Heart left ventricle (tissue), 16 donors: ENCODE measurements at regions of chr5 and their contacts with region 1.

Region 1: DNA sequence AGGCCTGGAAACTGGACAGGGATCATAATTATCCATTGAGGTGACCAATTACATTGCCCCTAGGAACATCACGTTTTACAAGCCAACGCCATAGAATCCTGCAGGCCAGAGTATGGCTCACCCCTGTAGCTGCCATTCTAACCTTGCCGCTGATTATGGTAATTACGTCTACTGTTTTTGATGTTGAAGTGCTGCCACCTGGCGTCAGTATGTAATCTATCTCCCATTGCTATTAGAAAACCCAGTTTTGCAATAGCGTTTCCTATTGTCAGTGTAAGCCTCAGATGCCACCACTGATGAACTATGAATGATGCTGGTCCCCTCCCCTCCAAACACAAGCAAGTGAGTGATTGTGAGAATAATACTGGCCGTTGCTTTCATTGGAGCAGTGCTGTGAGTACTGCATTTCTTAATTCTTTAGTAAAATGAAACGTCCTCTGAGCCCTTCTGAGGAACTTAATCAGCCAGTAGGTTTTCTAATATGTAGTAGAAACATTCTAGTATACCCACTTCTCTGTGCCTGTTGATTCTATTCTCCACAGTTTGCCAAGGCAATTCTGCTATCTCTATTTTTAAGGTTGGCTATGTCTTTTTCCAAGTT is 100.5 kb upstream of the NMUR2 start:
- DNase-seq: peak in 4 of 5 donors; percentile 32 to 50 (median 43)
- ATAC-seq: peak; percentile 42 to 89 (median 78)
- H3K4me3 ChIP-seq: no peak overlapping the region
- H3K27ac ChIP-seq: no peak overlapping the region
- H3K4me1 ChIP-seq: no peaks in the 10 kb centered on the region
- H3K27me3 ChIP-seq: peaks cover 0 to 6% (median 0%) of the 10 kb centered on the region in 9 donors
- CTCF ChIP-seq: peak; percentile 49 to 72 (median 56)
- POLR2A ChIP-seq: no peak

Region 2: GRCh38 chr5:151659001-151659754 is 846.4 kb before region 1 on chr5:
- intact Hi-C with region 1: loop called in 2 of 10 experiments (anchors 5 to 10 kb)
- DNase-seq: peak; percentile 84 to 92 (median 87)
- ATAC-seq: peak; percentile 75 to 87 (median 86)
- H3K4me3 ChIP-seq: no peak overlapping the region
- H3K27ac ChIP-seq: peak overlapping the region in 9 of 12 donors; percentile 4 to 52 (median 28)
- H3K4me1 ChIP-seq: peaks cover 3 to 39% (median 23%) of the 10 kb centered on the region in 12 donors
- H3K27me3 ChIP-seq: no peaks in the 10 kb centered on the region
- CTCF ChIP-seq: peak; percentile 80 to 98 (median 92)
- POLR2A ChIP-seq: no peak

Region 3: DNA sequence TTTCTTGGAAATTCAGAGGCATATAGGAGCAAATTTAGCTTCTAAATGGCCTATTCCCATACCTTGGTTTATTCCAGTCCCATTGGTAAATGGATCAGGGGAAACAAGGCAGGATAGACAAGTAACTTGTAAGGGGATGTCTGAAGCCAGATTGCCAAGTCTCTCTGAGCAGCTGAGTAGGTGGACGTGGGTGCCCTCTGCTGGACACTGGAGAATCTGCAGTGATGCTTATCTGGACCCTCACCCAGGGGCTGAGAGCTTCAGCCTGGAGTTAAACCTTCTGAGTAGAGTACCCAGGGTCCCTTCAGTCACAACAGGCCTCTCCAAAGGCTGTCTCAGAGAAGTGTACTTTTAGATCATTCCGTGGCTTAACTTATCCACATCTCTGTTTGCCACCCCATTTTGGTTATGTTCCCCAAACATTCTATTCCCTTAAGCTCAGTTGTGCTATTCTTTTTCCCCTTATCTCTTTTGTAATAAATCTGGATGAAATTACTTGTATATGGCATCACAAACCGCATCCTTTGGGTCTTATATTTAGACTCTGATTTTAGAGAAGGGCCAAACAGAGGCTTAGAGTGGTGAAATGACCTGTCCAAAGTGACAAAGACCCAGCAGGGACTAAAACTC is 362.6 kb before region 1 on chr5:
- intact Hi-C with region 1: loop called in 4 of 10 experiments (anchors 5 to 10 kb)
- DNase-seq: peak in 4 of 5 donors; percentile 25 to 48 (median 39)
- ATAC-seq: peak in 3 of 4 donors; percentile 68 to 78 (median 73)
- H3K4me3 ChIP-seq: no peak overlapping the region
- H3K27ac ChIP-seq: no peak overlapping the region
- H3K4me1 ChIP-seq: peaks cover 0 to 3% (median 0%) of the 10 kb centered on the region in 12 donors
- H3K27me3 ChIP-seq: no peaks in the 10 kb centered on the region
- CTCF ChIP-seq: peak; percentile 72 to 93 (median 84)
- POLR2A ChIP-seq: no peak

Region 4: DNA sequence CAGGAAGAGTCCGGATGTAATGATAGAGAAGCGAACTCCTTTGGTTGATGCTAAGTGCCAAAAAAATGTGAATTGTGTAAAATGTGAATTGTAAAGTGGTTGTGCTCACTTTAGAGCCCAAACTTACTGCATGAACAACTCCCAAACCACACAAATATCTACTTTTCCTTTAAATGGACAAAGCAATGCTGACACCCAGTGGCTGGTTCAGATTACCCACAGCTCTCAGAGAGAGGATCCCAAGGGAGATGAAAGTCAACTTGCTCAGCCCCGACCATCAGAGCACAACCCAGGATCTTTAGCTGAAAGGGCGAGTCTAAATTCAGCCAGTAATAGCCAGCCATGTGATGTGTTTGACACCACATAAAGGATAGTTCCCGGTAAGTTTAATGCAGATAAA is 234.1 kb before region 1 on chr5:
- intact Hi-C with region 1: loop called in 4 of 10 experiments (anchors 10 kb)
- DNase-seq: peak in 4 of 5 donors; percentile 21 to 30 (median 27)
- ATAC-seq: peak in 3 of 4 donors; percentile 72 to 80 (median 75)
- H3K4me3 ChIP-seq: no peak overlapping the region
- H3K27ac ChIP-seq: peak overlapping the region in 3 of 12 donors; percentile 0 to 35 (median 15)
- H3K4me1 ChIP-seq: peaks cover 0 to 49% (median 22%) of the 10 kb centered on the region in 12 donors
- H3K27me3 ChIP-seq: no peaks in the 10 kb centered on the region
- CTCF ChIP-seq: peak; percentile 20 to 69 (median 54)
- POLR2A ChIP-seq: no peak

Region 5: DNA sequence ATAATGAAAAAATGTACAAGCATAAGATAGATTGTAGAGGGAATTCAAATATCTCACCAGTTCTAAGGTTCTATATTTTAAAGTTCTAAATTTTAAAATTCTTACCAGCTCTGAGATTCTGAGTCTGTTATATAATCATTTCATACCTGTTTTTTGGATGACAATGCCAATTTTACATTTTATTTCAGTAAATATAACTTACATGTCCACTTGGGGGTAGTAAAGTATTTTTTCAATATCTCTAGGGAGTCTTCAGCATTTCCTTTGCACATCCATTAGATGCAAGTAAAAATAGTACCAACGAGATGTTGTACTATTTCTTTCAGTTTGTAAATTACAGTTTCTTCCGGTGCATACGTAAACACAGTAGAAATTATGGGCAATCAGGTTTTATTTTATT is 126.2 kb before region 1 on chr5:
- intact Hi-C with region 1: loop called in 9 of 10 experiments (anchors 2 to 10 kb)
- DNase-seq: no peak
- ATAC-seq: no peak
- H3K4me3 ChIP-seq: no peak overlapping the region
- H3K27ac ChIP-seq: no peak overlapping the region
- H3K4me1 ChIP-seq: peaks cover 0 to 27% (median 2%) of the 10 kb centered on the region in 12 donors
- H3K27me3 ChIP-seq: no peaks in the 10 kb centered on the region
- CTCF ChIP-seq: peak in 2 of 12 donors; percentile 7 to 14
- POLR2A ChIP-seq: no peak

Region 6: DNA sequence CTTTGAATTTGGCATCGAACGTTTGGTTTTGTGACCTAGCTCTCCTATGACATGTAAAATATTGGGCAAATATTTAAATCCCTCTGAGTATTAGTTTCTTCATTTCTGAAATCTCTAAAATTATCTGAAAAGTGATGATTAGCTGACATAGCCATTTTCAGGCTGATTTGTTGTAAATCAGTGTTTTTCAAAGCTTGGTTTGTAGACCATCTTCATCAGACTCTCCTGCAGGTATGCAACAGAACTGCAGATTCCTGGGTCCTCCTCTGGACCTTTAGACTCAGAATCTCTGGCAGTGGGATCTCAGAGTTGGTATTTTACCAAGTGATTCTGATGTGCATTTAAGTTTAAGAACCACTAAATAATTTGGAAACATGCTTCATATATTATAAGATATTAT is 61.6 kb before region 1 on chr5:
- intact Hi-C with region 1: no loop called
- DNase-seq: no peak
- ATAC-seq: no peak
- H3K4me3 ChIP-seq: no peak overlapping the region
- H3K27ac ChIP-seq: no peak overlapping the region
- H3K4me1 ChIP-seq: no peaks in the 10 kb centered on the region
- H3K27me3 ChIP-seq: no peaks in the 10 kb centered on the region
- CTCF ChIP-seq: no peak
- POLR2A ChIP-seq: no peak